Aorta (tissue), 5 donors: ENCODE measurements at regions of chr6 and their contacts with region 1.

Region 1: GRCh38 chr6:57267586-57268293 is 45.6 kb upstream of the RAB23 start:
- DNase-seq: peak in 1 of 2 donors; percentile 75
- ATAC-seq: peak; percentile 94
- H3K4me3 ChIP-seq: no peak overlapping the region
- H3K27ac ChIP-seq: peak overlapping the region in 1 of 2 donors; percentile 76
- H3K4me1 ChIP-seq: peaks cover 0 to 22% of the 10 kb centered on the region in 2 donors
- H3K27me3 ChIP-seq: no peaks in the 10 kb centered on the region

Region 2: GRCh38 chr6:56916806-56917551 is 350.8 kb before region 1 on chr6:
- intact Hi-C with region 1: no loop called
- DNase-seq: no peak
- ATAC-seq: no peak
- H3K4me3 ChIP-seq: no peak overlapping the region
- H3K27ac ChIP-seq: no peak overlapping the region
- H3K4me1 ChIP-seq: peaks cover 0 to 2% of the 10 kb centered on the region in 2 donors
- H3K27me3 ChIP-seq: no peaks in the 10 kb centered on the region

Region 3: GRCh38 chr6:57172136-57173055 is 95.3 kb before region 1 on chr6 and contains the start of gene BAG2:
- intact Hi-C with region 1: loop called (anchors 5 to 10 kb)
- DNase-seq: peak; percentile 94 to 97
- ATAC-seq: peak; percentile 94
- H3K4me3 ChIP-seq: peak within 1 kb of the TSS; percentile 83 to 98
- H3K27ac ChIP-seq: peak within 1 kb of the TSS; percentile 64 to 88
- H3K4me1 ChIP-seq: peaks cover 0 to 4% of the 10 kb centered on the region in 2 donors
- H3K27me3 ChIP-seq: no peaks in the 10 kb centered on the region
- total RNA-seq, gene BAG2: 18.8 to 32.9 TPM

Region 4: GRCh38 chr6:57303931-57304681 is 36.4 kb after region 1 on chr6:
- intact Hi-C with region 1: no loop called
- DNase-seq: no peak
- ATAC-seq: peak; percentile 79
- H3K4me3 ChIP-seq: no peak overlapping the region
- H3K27ac ChIP-seq: no peak overlapping the region
- H3K4me1 ChIP-seq: no peaks in the 10 kb centered on the region
- H3K27me3 ChIP-seq: no peaks in the 10 kb centered on the region